ENCODE measurements at regions of chr14 and their contacts with region 1.

Region 1: GRCh38 chr14:92951912-92952471 is 29.0 kb downstream of the CHGA start:
- DNase-seq: peak; percentile 89
- ATAC-seq: peak; percentile 75

Region 2: DNA sequence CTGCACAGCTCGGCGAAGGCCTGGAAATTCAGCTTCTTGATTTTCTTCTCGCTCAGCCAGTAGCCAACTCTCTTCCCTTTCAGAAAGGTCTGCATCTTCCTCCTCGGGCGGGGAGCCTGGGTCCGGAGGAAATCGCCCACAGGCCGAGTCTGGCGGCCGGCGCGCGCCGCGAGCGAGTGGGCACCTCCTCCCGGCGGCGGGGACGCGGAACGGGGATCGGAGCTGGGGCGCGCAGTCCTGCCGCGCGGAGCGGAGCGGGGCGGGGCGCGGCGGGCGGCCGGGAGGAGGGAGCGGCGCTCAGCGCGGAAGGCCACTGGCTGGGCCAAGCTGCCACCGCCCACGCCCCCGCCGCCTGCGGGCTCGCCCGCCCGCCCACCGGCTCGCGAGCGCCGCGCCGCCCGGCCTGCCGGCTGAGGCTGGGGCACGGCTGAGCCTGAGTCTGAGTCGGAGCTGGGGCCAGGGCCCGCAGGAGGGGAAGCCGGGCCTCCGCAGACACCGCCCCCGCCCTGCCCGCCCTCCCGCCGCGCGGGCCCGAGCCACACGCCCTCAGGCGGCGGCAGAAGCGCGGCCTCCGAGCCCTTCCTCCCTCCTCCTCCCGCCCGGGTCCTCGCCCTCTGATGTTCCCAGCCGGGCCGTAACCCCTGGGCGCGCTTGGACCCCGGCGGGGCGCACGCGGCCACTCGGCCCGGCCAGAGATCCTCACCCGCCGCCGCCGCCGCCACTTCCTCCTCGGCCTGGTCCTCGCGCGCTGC is 163.3 kb after region 1 on chr14:
- intact Hi-C with region 1: loop called (anchors 2 kb)
- DNase-seq: peak; percentile 93
- ATAC-seq: peak; percentile 90

Region 3: GRCh38 chr14:93137864-93138263 is 185.9 kb after region 1 on chr14:
- intact Hi-C with region 1: loop called (anchors 2 kb)
- DNase-seq: peak; percentile 73
- ATAC-seq: peak; percentile 83

Measured in Right ventricle myocardium superior (tissue), 1 donor.